ENCODE measurements at regions of chr11 and their contacts with region 1.

Region 1: GRCh38 chr11:83006877-83007330 is 64.8 kb downstream of the RAB30 start:
- DNase-seq: no peak
- H3K4me3 Mint-ChIP-seq: no peak overlapping the region
- H3K27ac Mint-ChIP-seq: peak overlapping the region; percentile 1
- H3K4me1 Mint-ChIP-seq: peaks cover 19% of the 10 kb centered on the region
- H3K27me3 Mint-ChIP-seq: no peaks in the 10 kb centered on the region
- CTCF ChIP-seq: no peak

Region 2: DNA sequence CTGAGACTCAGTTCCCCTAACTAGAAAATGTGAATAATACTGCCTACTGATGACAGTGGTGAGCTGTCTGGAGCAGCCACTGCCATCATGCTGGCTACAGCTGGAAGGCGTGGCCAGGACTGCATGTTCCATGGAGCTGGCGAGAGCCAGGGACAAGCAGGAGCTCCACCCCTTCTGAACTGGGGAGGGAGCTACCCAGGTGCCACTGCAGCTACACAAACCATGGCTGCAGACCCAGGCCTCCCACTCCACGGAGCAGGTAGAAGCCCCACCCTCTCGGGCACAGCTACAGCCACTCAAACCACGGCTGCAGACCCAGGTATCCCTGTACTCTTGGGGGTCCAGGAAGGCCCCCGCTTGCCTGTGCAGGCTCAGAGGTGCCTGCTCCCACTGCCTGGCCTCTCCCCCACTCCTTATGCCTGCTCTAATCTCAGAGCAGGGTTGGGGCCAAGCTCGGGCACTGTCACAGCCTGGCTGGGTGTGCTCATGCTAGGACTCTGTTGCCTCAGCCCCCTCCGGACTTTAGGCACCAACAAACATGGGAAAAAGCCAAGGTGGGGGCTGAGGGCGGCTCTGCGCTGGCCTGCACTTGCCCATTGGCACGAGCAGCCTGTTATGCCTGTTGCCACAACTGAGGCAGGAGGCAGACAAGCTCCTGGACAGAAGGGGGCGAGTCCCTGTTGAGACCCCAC is 13.1 kb after region 1 on chr11:
- CTCF ChIA-PET with region 1: interaction called, 11 read pairs
- POLR2A ChIA-PET with region 1: interaction called, 3 read pairs
- intact Hi-C with region 1: no loop called
- DNase-seq: peak; percentile 29
- H3K4me3 Mint-ChIP-seq: no peak overlapping the region
- H3K27ac Mint-ChIP-seq: peak overlapping the region; percentile 61
- H3K4me1 Mint-ChIP-seq: peaks cover 19% of the 10 kb centered on the region
- H3K27me3 Mint-ChIP-seq: no peaks in the 10 kb centered on the region
- CTCF ChIP-seq: no peak

Region 3: GRCh38 chr11:83112886-83113285 is 106.0 kb after region 1 on chr11:
- CTCF ChIA-PET with region 1: no interaction called
- POLR2A ChIA-PET with region 1: no interaction called
- intact Hi-C with region 1: no loop called
- DNase-seq: no peak
- H3K4me3 Mint-ChIP-seq: no peak overlapping the region
- H3K27ac Mint-ChIP-seq: no peak overlapping the region
- H3K4me1 Mint-ChIP-seq: peaks cover 6% of the 10 kb centered on the region
- H3K27me3 Mint-ChIP-seq: peaks cover 12% of the 10 kb centered on the region
- CTCF ChIP-seq: no peak

Measured in MCF 10A (cell line).